ENCODE measurements at regions of chrX and their contacts with region 1.

Region 1: DNA sequence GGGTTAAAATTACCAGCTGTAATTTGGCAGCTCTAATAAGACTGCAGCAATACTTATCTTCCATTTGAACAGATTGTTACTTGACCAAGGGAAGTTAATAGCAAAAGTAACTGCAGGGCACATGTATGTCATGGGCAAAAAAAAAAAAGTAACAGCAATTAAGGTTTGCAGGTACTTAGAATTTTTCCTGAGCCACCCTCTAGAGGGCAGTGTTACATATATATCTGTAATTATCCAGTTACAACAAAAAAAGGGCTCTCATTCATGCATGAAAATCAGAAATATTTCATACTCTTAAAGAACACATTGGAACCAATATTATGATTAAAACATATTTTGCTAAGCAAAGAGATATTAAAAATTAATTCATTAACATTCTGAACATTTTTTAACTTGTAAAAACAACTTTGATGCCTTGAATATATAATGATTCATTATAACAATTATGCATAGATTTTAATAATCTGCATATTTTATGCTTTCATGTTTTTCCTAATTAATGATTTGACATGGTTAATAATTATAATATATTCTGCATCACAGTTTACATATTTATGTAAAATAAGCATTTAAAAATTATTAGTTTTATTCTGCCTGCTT is 25.1 kb downstream of the XIAP start:
- DNase-seq: peak in 7 of 14 experiments; percentile 2 to 72 (median 43)
- ATAC-seq: peak; percentile 73
- H3K4me3 ChIP-seq: no peak overlapping the region
- H3K4me3 Mint-ChIP-seq: no peak overlapping the region
- H3K27ac ChIP-seq: no peak overlapping the region
- H3K27ac Mint-ChIP-seq: peak overlapping the region; percentile 36
- H3K4me1 ChIP-seq: no peaks in the 10 kb centered on the region
- H3K4me1 Mint-ChIP-seq: peaks cover 12% of the 10 kb centered on the region
- H3K27me3 ChIP-seq: no peaks in the 10 kb centered on the region
- H3K27me3 Mint-ChIP-seq: no peaks in the 10 kb centered on the region
- CTCF ChIP-seq: peak; percentile 68

Region 2: DNA sequence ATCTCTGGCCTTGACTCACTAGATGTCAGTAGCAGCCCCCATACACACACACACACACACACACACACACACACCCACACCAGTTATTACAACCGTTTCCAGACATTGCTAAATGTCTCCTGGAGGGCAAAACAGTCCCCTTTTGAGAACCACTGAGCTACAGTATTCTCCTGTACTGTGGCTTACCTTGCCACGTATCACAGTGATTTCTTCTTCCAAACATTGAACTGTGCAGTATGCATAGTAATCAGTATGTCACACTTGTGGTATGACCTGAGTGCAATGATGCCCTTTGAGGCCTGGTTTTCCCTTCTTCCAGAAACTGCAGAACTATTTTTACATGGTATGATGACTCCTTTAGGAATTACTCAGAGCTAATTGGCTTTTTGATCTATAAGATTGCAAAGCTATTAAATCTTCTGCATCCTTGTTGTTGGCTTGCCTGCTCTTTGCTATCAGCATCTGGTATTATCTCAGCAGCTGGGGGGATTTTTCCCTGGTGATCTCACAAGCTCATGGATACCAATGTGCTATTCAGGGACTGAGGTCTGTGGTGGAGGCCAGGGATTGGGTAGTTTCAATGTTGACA is 148.5 kb before region 1 on chrX:
- CTCF ChIA-PET with region 1: no interaction called
- POLR2A ChIA-PET with region 1: no interaction called
- intact Hi-C with region 1: no loop called
- DNase-seq: no peak
- ATAC-seq: no peak
- H3K4me3 ChIP-seq: no peak overlapping the region
- H3K4me3 Mint-ChIP-seq: no peak overlapping the region
- H3K27ac ChIP-seq: no peak overlapping the region
- H3K27ac Mint-ChIP-seq: no peak overlapping the region
- H3K4me1 ChIP-seq: peaks cover 10% of the 10 kb centered on the region
- H3K4me1 Mint-ChIP-seq: peaks cover 14% of the 10 kb centered on the region
- H3K27me3 ChIP-seq: no peaks in the 10 kb centered on the region
- H3K27me3 Mint-ChIP-seq: no peaks in the 10 kb centered on the region
- CTCF ChIP-seq: no peak

Region 3: DNA sequence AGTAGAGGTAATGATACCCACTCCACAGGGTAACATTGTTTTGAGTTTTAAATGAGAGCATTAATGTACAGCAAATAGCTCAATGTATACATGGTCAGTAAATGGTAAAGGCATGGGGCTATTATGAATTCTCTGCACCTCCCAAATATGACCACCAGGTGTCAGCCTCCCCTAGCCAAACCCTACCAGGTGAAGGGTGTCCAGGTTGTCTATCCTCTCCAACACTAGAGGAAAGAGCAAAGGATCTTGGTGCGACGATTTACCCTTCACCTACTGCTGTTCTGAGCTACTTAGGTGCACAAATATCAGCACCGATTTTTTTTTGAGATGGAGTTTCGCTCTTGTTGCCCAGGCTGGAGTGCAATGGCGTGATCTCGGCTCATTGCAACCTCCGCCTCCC is 51.5 kb before region 1 on chrX:
- CTCF ChIA-PET with region 1: interaction called, 3 read pairs
- POLR2A ChIA-PET with region 1: interaction called, 3 read pairs
- intact Hi-C with region 1: loop called (anchors 2 to 5 kb)
- DNase-seq: peak; percentile 22 to 76 (median 46)
- ATAC-seq: peak; percentile 94
- H3K4me3 ChIP-seq: no peak overlapping the region
- H3K4me3 Mint-ChIP-seq: no peak overlapping the region
- H3K27ac ChIP-seq: no peak overlapping the region
- H3K27ac Mint-ChIP-seq: no peak overlapping the region
- H3K4me1 ChIP-seq: no peaks in the 10 kb centered on the region
- H3K4me1 Mint-ChIP-seq: no peaks in the 10 kb centered on the region
- H3K27me3 ChIP-seq: no peaks in the 10 kb centered on the region
- H3K27me3 Mint-ChIP-seq: peaks cover 3% of the 10 kb centered on the region
- CTCF ChIP-seq: peak; percentile 61

Measured in CD4-positive, alpha-beta T cell (primary cell).